Endothelial cell of umbilical vein (primary cell): ENCODE measurements at regions of chr18 and their contacts with region 1.

Region 1: DNA sequence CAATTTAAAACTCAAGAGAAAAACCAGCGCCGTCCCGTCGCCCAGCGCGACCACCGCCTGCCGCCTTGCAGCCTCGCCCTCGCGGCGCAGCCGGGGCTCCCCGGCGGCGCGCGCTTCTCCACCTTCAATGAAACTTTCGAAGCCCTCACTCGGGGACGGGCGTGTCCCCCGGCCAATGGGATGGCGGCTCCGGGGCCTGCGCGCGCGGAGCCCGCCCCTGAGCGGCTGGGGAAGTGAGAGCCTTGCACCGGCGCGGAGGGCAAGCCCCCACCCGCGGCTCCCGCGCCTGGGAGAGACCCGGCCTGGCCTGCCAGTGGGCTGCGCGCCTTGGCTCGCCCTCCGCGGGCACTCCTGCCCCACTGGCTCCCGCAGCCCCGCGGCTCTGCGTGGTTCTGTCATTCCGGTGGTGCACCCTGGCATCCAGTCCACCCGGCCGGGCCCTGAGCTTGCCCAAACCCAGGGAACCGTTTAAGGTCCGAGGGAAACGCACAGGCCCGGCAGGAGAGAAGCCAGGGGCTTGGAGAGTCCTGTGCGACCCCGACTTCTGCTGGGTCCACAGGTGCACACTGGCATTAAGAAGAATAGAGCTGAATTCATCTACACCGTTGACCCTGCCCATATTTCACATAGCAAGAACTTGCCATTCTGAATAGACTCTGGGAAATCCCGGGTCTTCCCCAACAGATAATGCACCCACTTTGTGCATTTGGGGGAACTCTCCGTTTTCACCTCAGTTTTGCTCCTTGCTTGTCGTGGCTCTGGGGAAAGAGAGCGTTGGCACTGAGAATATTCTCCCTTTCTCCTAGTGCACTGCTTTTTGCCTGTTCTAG is at the start of gene PIEZO2:
- DNase-seq: peak; percentile 29
- H3K4me3 ChIP-seq: peak within 1 kb of the TSS in 2 of 3 experiments; percentile 21 to 25
- H3K27ac ChIP-seq: no peak within 1 kb of the TSS
- H3K4me1 ChIP-seq: no peaks in the 10 kb centered on the region
- H3K27me3 ChIP-seq: peaks cover 44 to 47% of the 10 kb centered on the region in 2 experiments
- CTCF ChIP-seq: no peak
- POLR2A ChIP-seq: no peak
- total RNA-seq, gene PIEZO2: 5.0 and 11.2 TPM in 2 replicates

Region 2: GRCh38 chr18:10660179-10660884 is 489.3 kb before region 1 on chr18:
- CTCF ChIA-PET with region 1: no interaction called
- POLR2A ChIA-PET with region 1: no interaction called
- dilution Hi-C with region 1: no loop called
- intact Hi-C with region 1: loop called (anchors 5 kb)
- DNase-seq: no peak
- H3K4me3 ChIP-seq: no peak overlapping the region
- H3K27ac ChIP-seq: no peak overlapping the region
- H3K4me1 ChIP-seq: no peaks in the 10 kb centered on the region
- H3K27me3 ChIP-seq: no peaks in the 10 kb centered on the region
- CTCF ChIP-seq: no peak
- POLR2A ChIP-seq: no peak

Region 3: DNA sequence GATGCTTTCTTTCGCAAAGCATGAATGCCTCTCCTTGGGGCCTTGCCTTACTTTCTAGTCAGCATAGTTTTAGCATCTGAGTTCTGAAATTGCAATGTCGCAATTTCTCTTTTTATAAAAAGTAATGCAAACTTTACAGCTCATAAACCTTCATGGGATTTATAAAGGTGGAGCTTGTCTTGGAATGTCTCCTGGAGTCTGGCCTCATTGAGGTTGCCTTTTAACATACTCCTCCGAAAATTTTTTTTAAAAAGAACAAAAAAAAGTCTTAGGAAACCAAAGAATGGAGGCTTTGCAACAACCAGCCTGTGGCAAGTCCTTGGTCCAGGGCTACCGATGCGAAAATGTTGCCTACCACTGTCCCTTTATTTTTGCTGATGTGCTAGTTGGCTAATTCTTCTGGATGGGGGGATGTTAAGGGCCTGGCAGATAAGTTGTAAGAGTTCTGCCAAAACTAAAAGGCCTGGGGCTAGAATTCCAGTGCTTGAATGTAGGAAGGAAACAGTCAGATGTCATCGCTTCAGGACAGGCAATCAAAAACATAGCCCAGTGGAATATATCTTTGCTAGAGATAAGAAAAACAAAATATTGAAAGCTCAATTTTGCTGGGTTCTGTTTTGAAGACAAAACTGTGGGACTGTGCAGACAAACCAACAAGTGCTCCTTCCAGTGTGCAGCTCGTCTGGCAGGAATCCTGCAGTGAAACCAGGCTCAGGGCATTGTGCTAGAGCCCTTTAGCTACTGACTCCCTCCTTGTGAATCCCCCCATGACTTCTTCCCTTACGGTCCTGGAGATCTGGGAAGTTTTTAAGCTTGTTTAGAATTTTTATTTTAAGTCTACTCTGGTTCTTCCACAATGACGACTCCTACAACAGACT is 213.2 kb before region 1 on chr18:
- CTCF ChIA-PET with region 1: no interaction called
- POLR2A ChIA-PET with region 1: no interaction called
- dilution Hi-C with region 1: no loop called
- intact Hi-C with region 1: no loop called
- DNase-seq: peak; percentile 31
- H3K4me3 ChIP-seq: no peak overlapping the region
- H3K27ac ChIP-seq: no peak overlapping the region
- H3K4me1 ChIP-seq: no peaks in the 10 kb centered on the region
- H3K27me3 ChIP-seq: no peaks in the 10 kb centered on the region
- CTCF ChIP-seq: no peak
- POLR2A ChIP-seq: no peak

Region 4: GRCh38 chr18:11163665-11164064 is 14.0 kb after region 1 on chr18:
- CTCF ChIA-PET with region 1: interaction called, 33 read pairs
- POLR2A ChIA-PET with region 1: no interaction called
- dilution Hi-C with region 1: no loop called
- intact Hi-C with region 1: no loop called
- DNase-seq: peak; percentile 36
- H3K4me3 ChIP-seq: no peak overlapping the region
- H3K27ac ChIP-seq: no peak overlapping the region
- H3K4me1 ChIP-seq: no peaks in the 10 kb centered on the region
- H3K27me3 ChIP-seq: peaks cover 0 to under 1% of the 10 kb centered on the region in 2 experiments
- CTCF ChIP-seq: peak; percentile 74 to 84
- POLR2A ChIP-seq: no peak

Region 5: DNA sequence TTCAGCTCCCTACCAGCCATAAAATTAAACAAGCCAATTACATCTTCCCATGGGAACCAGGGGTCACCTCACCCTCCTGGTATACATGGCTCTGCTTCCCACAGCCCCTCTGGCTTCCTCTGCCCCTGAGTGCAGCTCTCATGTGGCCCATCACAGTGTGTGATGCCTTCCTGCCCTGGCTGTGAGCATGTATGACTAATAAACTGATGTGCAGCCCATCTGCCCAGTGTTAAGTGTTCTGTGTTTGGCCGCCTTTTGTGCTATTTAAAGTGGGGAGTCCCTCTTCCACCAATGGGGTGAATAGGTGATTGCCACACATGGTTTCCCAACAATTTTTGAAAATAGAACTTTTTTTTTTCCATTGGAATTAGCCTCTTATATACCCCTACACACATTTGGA is 87.4 kb after region 1 on chr18:
- CTCF ChIA-PET with region 1: no interaction called
- POLR2A ChIA-PET with region 1: no interaction called
- dilution Hi-C with region 1: no loop called
- intact Hi-C with region 1: no loop called
- DNase-seq: no peak
- H3K4me3 ChIP-seq: no peak overlapping the region
- H3K27ac ChIP-seq: no peak overlapping the region
- H3K4me1 ChIP-seq: no peaks in the 10 kb centered on the region
- H3K27me3 ChIP-seq: no peaks in the 10 kb centered on the region
- CTCF ChIP-seq: no peak
- POLR2A ChIP-seq: no peak